ENCODE measurements at regions of chr1 and their contacts with region 1.

Region 1: GRCh38 chr1:209190591-209191261 is 392.8 kb upstream of the CAMK1G start:
- DNase-seq: no peak
- H3K4me3 ChIP-seq: no peak overlapping the region
- H3K27ac ChIP-seq: no peak overlapping the region
- H3K4me1 ChIP-seq: no peaks in the 10 kb centered on the region
- H3K27me3 ChIP-seq: no peaks in the 10 kb centered on the region
- CTCF ChIP-seq: peak in 5 of 6 experiments; percentile 46 to 74 (median 55)
- POLR2A ChIP-seq: no peak

Region 2: GRCh38 chr1:208652296-208653160 is 538.2 kb before region 1 on chr1:
- intact Hi-C with region 1: loop called (anchors 10 kb)
- DNase-seq: no peak
- H3K4me3 ChIP-seq: no peak overlapping the region
- H3K27ac ChIP-seq: no peak overlapping the region
- H3K4me1 ChIP-seq: peaks cover 0 to 28% (median 13%) of the 10 kb centered on the region in 3 donors
- H3K27me3 ChIP-seq: peaks cover 0 to 81% (median 0%) of the 10 kb centered on the region in 4 donors
- CTCF ChIP-seq: peak; percentile 33 to 88 (median 83)
- POLR2A ChIP-seq: no peak

Region 3: DNA sequence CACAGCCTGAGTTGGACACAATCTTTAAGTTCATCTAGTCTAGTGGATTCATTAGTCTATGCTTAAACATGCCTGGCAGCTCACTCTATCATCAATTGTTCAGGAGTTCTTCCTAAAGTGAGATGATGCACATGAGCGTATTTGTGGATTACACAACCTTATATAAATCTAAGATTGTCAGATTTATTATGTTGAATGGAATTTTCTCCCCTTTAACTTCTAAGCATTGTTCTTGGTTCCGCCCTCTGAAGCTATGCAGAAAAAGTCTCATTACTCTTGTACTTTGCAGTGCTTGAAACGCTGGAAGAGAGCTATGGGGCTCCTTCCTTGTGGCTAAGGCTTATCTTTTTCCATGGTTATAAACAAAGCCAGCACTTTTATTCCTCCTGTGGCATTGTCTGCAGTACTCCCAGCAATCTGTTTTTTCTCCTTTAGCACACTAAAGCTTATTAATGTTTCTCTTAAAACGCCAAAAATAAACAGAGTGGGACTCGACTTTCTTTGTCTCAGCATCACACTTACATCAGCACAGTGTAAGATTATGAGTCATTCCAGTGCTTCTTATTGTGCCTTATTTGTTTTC is 76.0 kb after region 1 on chr1:
- intact Hi-C with region 1: no loop called
- DNase-seq: no peak
- H3K4me3 ChIP-seq: no peak overlapping the region
- H3K27ac ChIP-seq: no peak overlapping the region
- H3K4me1 ChIP-seq: peaks cover 0 to 8% (median 0%) of the 10 kb centered on the region in 3 donors
- H3K27me3 ChIP-seq: no peaks in the 10 kb centered on the region
- CTCF ChIP-seq: no peak
- POLR2A ChIP-seq: no peak